CD8-positive, alpha-beta T cell (primary cell): ENCODE measurements at regions of chr22 and their contacts with region 1.

Region 1: GRCh38 chr22:19674129-19674928 is 40.0 kb upstream of the SEPTIN5 start:
- DNase-seq: no peak
- ATAC-seq: no peak
- H3K4me3 ChIP-seq: no peak overlapping the region
- H3K4me3 Mint-ChIP-seq: no peak overlapping the region
- H3K27ac ChIP-seq: no peak overlapping the region
- H3K27ac Mint-ChIP-seq: no peak overlapping the region
- H3K4me1 ChIP-seq: no peaks in the 10 kb centered on the region
- H3K4me1 Mint-ChIP-seq: no peaks in the 10 kb centered on the region
- H3K27me3 ChIP-seq: no peaks in the 10 kb centered on the region
- H3K27me3 Mint-ChIP-seq: peaks cover 13% of the 10 kb centered on the region
- CTCF ChIP-seq: no peak

Region 2: GRCh38 chr22:19619144-19620009 is 55.0 kb before region 1 on chr22:
- CTCF ChIA-PET with region 1: no interaction called
- POLR2A ChIA-PET with region 1: no interaction called
- intact Hi-C with region 1: loop called in 1 of 2 experiments (anchors 5 kb)
- DNase-seq: no peak
- ATAC-seq: no peak
- H3K4me3 ChIP-seq: no peak overlapping the region
- H3K4me3 Mint-ChIP-seq: no peak overlapping the region
- H3K27ac ChIP-seq: no peak overlapping the region
- H3K27ac Mint-ChIP-seq: no peak overlapping the region
- H3K4me1 ChIP-seq: peaks cover 8% of the 10 kb centered on the region
- H3K4me1 Mint-ChIP-seq: peaks cover 11% of the 10 kb centered on the region
- H3K27me3 ChIP-seq: no peaks in the 10 kb centered on the region
- H3K27me3 Mint-ChIP-seq: no peaks in the 10 kb centered on the region
- CTCF ChIP-seq: no peak

Region 3: DNA sequence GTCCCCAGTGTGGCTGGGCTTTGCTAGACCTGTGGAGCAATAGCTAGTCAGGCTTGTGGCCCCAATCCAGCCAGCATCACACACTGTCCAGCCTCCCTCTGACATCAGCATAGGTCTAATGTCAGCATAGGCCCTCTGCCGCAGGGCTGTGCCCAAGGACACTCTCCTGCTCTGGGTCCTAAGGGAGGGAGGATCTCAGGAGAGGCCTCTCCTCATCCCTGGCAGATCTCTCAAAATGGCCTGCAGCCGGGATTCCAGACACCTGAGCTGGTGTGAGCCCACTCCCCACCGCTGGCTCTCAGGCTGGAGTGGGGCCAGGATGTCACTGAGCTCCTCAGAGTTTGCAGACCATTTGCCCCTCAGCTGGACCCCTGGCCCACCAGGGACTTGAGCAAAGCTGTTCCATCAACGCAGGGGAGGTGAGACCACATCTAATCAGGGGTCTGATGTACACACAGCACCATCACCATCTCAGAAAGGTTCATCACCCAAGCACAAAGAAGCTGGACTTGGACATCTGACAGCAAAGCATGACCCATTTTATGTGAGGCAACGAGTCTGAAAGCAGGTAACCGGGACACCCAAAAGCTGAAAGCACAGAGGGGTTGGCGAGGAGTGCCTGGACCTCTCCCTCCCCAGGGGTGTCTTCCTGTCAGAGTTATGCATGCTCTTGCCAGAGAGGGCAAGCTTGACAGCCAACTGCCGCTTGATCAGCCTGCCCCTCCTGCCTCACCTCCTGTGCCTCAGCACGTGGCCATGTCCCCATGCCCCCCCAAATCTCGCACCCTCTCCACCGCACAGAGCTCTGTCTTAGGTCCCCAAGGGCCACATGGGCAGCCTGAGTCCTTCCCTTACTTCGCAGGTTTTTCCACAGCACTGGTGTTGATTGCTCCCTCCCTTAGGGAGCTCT is 29.8 kb before region 1 on chr22:
- CTCF ChIA-PET with region 1: no interaction called
- POLR2A ChIA-PET with region 1: no interaction called
- intact Hi-C with region 1: no loop called
- DNase-seq: no peak
- ATAC-seq: no peak
- H3K4me3 ChIP-seq: no peak overlapping the region
- H3K4me3 Mint-ChIP-seq: no peak overlapping the region
- H3K27ac ChIP-seq: no peak overlapping the region
- H3K27ac Mint-ChIP-seq: no peak overlapping the region
- H3K4me1 ChIP-seq: no peaks in the 10 kb centered on the region
- H3K4me1 Mint-ChIP-seq: no peaks in the 10 kb centered on the region
- H3K27me3 ChIP-seq: no peaks in the 10 kb centered on the region
- H3K27me3 Mint-ChIP-seq: peaks cover 31% of the 10 kb centered on the region
- CTCF ChIP-seq: no peak

Region 4: DNA sequence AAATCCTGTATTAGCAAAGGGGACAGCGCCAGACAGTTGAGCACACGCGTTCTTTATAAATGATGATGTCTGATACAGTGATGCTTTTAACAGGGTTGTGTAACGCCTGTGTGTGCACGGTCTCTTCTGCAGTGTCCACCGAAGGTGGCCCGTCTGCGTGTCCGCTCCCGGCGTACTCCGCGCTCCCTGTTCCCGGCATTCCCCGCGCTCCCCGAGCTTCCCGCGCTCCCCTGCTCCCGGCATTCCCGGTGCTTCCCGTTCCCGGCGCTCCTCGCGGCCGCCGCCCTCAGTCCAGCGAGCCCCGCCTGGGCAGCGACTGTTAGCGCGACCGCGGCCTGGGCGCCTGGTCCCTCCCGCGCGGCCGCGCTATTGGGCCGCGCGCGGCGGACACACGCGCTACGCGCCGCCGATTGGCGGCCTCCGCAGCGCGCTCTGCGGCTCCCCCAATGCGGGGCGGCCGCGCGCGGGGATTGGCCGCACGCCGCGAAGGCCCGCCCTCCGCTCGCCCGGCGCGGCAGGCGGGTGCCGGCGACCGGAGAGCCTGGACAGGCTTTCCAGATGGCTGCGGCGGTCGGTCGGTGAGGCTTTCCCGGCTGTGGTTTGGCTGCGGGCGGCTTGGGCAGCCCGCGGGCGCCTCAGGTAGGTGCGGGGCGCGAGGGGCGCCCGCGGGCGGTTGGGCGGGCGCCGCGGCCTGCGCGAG is 405.6 kb after region 1 on chr22 and contains the start of gene DGCR8:
- CTCF ChIA-PET with region 1: no interaction called
- POLR2A ChIA-PET with region 1: no interaction called
- intact Hi-C with region 1: no loop called
- DNase-seq: peak; percentile 45 to 91 (median 66)
- ATAC-seq: peak; percentile 91
- H3K4me3 ChIP-seq: peak within 1 kb of the TSS; percentile 73 to 99
- H3K4me3 Mint-ChIP-seq: peak within 1 kb of the TSS; percentile 97
- H3K27ac ChIP-seq: peak within 1 kb of the TSS; percentile 62 to 64
- H3K27ac Mint-ChIP-seq: peak within 1 kb of the TSS; percentile 96
- H3K4me1 ChIP-seq: peaks cover 18% of the 10 kb centered on the region
- H3K4me1 Mint-ChIP-seq: peaks cover 43% of the 10 kb centered on the region
- H3K27me3 ChIP-seq: no peaks in the 10 kb centered on the region
- H3K27me3 Mint-ChIP-seq: no peaks in the 10 kb centered on the region
- CTCF ChIP-seq: no peak
- total RNA-seq, gene DGCR8: 16.9 to 22.1 TPM